Activated T-helper 1 cell treated with anti-CD3 and anti-CD28 coated beads, Interleukin-12 subunit alpha, Interleukin-12 subunit beta, Interleukin-2, Interleukin-4 antibody, amounts not matched to agents 30 ng/mL and 10 ng/mL and 1 ng/mL, durations not matched to agents 14 hours and 24 hours and 36 hours (primary cell): ENCODE measurements at regions of chr1 and their contacts with region 1.

Region 1: GRCh38 chr1:153699768-153700167 is 21.3 kb downstream of the NPR1 start:
- DNase-seq: no peak
- H3K4me3 Mint-ChIP-seq: no peak overlapping the region
- H3K27ac Mint-ChIP-seq: no peak overlapping the region
- H3K4me1 Mint-ChIP-seq: no peaks in the 10 kb centered on the region
- H3K27me3 Mint-ChIP-seq: no peaks in the 10 kb centered on the region

Region 2: DNA sequence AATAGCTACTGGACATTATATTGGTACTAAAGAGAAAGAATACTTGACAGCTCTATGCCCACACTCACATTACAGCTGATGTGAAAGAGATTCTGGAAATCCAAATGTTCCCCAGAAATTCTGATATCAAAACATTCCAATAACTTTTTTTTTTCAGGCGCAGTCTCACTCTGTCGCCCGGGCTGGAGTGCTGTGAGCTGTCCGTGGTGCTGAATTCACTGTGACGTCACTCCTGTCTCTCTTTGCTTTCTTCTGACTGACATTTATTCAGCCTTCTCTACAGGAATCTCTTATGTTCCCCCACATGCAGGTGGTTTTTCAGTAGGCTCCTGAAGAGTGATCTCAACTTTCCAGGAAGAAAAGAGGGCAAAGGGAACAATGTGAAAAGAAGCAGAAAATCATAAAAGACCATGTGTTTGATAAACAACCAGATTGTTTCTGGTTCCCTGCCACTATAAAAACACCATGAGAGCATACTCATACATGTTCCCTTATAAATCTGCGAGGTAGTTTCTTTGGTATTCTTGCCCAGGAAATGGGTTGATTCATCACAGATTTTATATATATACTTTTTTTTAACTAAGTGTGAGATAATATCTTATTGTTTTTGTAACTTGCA is 277.2 kb before region 1 on chr1:
- intact Hi-C with region 1: no loop called
- DNase-seq: peak; percentile 50
- H3K4me3 Mint-ChIP-seq: no peak overlapping the region
- H3K27ac Mint-ChIP-seq: no peak overlapping the region
- H3K4me1 Mint-ChIP-seq: no peaks in the 10 kb centered on the region
- H3K27me3 Mint-ChIP-seq: peaks cover 3% of the 10 kb centered on the region

Region 3: GRCh38 chr1:153670859-153671627 is 28.7 kb before region 1 on chr1 and contains the start of gene ILF2:
- intact Hi-C with region 1: no loop called
- DNase-seq: peak; percentile 96
- H3K4me3 Mint-ChIP-seq: no peak within 1 kb of the TSS
- H3K27ac Mint-ChIP-seq: peak within 1 kb of the TSS; percentile 56
- H3K4me1 Mint-ChIP-seq: peaks cover 29% of the 10 kb centered on the region
- H3K27me3 Mint-ChIP-seq: no peaks in the 10 kb centered on the region
- total RNA-seq, gene ILF2: 354 and 366 TPM in 2 replicates

Region 4: GRCh38 chr1:153717330-153717729 is 17.6 kb after region 1 on chr1:
- intact Hi-C with region 1: loop called (anchors 1 kb)
- DNase-seq: no peak
- H3K4me3 Mint-ChIP-seq: no peak overlapping the region
- H3K27ac Mint-ChIP-seq: no peak overlapping the region
- H3K4me1 Mint-ChIP-seq: peaks cover 6% of the 10 kb centered on the region
- H3K27me3 Mint-ChIP-seq: peaks cover 20% of the 10 kb centered on the region